Activated CD8-positive, alpha-beta T cell treated with anti-CD3 and anti-CD28 coated beads for 36 hours (primary cell): ENCODE measurements at regions of chr17 and their contacts with region 1.

Region 1: DNA sequence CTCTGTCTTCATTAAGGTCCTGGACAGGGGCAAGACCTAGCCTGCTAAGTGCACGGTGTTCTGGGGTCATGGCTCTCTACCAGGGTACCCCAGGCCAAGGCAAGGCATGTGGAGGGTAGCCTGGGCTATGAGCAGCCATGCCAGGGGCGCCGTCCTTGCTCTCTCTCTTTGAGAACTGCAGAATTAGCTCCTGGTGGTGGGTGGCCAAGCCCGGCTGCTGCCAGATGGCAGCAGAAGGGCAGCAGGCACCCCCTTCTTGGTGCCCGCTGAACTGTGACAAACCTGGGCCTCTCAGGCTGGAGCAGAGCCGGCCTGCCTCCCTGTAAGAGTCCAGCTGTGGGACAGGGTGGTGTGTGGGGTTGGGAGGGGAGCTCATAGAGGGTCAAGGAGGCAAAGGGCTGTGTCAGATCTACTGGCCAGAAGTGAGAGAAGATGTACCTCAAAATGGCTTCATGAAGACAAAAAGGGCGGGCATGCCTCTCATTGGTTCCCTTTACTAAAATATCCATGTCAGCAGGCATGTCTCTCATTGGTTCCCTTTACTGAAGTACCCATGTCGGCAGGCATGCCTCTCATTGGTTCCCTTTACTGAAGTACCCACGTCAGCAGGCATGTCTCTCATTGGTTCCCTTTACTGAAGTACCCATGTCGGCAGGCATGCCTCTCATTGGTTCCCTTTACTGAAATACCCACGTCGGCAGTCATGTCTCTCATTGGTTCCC is 81.7 kb upstream of the SDK2 start:
- DNase-seq: no peak
- ATAC-seq: no peak
- H3K4me3 Mint-ChIP-seq: no peak overlapping the region
- H3K27ac Mint-ChIP-seq: no peak overlapping the region
- H3K4me1 Mint-ChIP-seq: peaks cover 22% of the 10 kb centered on the region
- H3K27me3 Mint-ChIP-seq: no peaks in the 10 kb centered on the region
- CTCF ChIP-seq: no peak

Region 2: GRCh38 chr17:73710095-73710592 is 15.8 kb before region 1 on chr17:
- CTCF ChIA-PET with region 1: interaction called, 11 read pairs
- POLR2A ChIA-PET with region 1: interaction called, 3 read pairs
- intact Hi-C with region 1: no loop called
- DNase-seq: peak; percentile 81
- ATAC-seq: peak; percentile 89
- H3K4me3 Mint-ChIP-seq: no peak overlapping the region
- H3K27ac Mint-ChIP-seq: no peak overlapping the region
- H3K4me1 Mint-ChIP-seq: peaks cover 8% of the 10 kb centered on the region
- H3K27me3 Mint-ChIP-seq: no peaks in the 10 kb centered on the region
- CTCF ChIP-seq: peak; percentile 89